AG04449 (cell line): ENCODE measurements at regions of chr9 and their contacts with region 1.

Region 1: DNA sequence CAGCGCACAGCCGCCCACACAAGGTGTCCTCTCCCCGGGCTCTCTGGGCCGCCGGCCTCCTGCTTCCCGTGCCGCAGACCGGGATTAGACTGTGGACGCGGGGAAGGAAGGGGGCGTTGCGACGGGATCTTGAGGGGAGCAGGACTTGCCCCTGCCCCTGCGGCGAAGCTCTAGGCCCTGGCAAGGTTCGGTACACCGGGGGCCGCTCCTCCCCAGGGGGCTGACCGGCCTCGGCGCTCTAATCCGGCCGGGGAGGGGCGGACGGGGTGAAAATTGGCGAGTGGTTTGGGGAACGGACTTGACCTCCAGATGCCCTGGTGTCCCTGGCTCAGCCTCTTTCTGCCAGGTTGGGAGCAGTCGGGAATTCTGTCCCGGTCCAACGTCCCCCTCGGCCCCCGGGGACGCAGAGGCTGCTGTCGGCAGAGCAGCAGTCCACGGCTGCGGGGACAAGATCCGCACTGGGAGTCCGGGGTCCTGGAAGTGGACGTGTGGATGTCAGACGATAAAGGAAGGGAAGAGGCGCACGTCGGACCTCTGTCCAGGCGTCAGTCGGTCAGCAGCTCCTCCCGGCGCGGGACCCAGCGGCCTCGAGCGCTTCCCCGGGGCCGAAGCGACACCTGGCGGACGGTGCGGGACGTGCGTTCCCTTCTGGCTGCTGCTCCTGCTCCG is 1.9 kb upstream of the CNTFR start:
- DNase-seq: no peak
- H3K4me3 ChIP-seq: no peak overlapping the region; the same call in 1 of the 2 replicates
- CTCF ChIP-seq: peak; percentile 99

Region 2: GRCh38 chr9:34430843-34431437 is 160.4 kb before region 1 on chr9:
- CTCF ChIA-PET with region 1: interaction called, 23 read pairs
- POLR2A ChIA-PET with region 1: no interaction called
- DNase-seq: peak; percentile 74
- H3K4me3 ChIP-seq: no peak overlapping the region
- CTCF ChIP-seq: no peak

Region 3: GRCh38 chr9:34446468-34446891 is 144.9 kb before region 1 on chr9:
- CTCF ChIA-PET with region 1: interaction called, 20 read pairs
- POLR2A ChIA-PET with region 1: no interaction called
- DNase-seq: no peak
- H3K4me3 ChIP-seq: no peak overlapping the region
- CTCF ChIP-seq: no peak

Region 4: GRCh38 chr9:34559624-34560452 is 31.5 kb before region 1 on chr9:
- CTCF ChIA-PET with region 1: interaction called, 255 read pairs
- POLR2A ChIA-PET with region 1: no interaction called
- DNase-seq: no peak
- H3K4me3 ChIP-seq: no peak overlapping the region
- CTCF ChIP-seq: no peak

Region 5: GRCh38 chr9:34578241-34579103 is 12.9 kb before region 1 on chr9:
- CTCF ChIA-PET with region 1: interaction called, 119 read pairs
- POLR2A ChIA-PET with region 1: no interaction called
- DNase-seq: no peak
- H3K4me3 ChIP-seq: peak overlapping the region; percentile 27; the same call in 1 of the 2 replicates
- CTCF ChIP-seq: no peak

Region 6: GRCh38 chr9:34611829-34612630 is 20.6 kb after region 1 on chr9 and contains the start of gene RPP25L:
- CTCF ChIA-PET with region 1: interaction called, 110 read pairs
- POLR2A ChIA-PET with region 1: no interaction called
- DNase-seq: no peak
- H3K4me3 ChIP-seq: peak within 1 kb of the TSS; percentile 86
- CTCF ChIP-seq: no peak

Region 7: DNA sequence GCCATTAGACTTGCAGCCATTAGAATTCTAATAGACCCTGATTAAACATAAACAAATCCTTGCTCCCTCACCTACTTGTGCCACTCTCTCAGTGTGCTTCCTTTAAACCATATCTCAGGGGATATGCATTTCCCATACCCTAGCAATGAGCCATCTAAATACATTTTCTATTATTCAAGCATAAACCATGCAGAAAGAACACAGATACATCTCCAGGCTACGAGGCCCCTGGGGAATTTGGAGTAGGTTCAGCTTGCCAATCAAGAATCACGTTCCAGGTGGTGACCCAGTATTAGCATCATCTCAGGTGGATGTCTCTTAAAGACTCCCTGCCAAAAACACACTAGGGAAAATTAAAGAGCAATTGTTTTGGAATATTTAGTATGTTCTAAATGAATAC is 211.5 kb after region 1 on chr9:
- CTCF ChIA-PET with region 1: no interaction called
- POLR2A ChIA-PET with region 1: no interaction called
- DNase-seq: no peak
- H3K4me3 ChIP-seq: no peak overlapping the region
- CTCF ChIP-seq: no peak